Posterior cingulate gyrus (tissue), 11 donors: ENCODE measurements at regions of chr14 and their contacts with region 1.

Region 1: GRCh38 chr14:54420013-54420809 is 21.0 kb downstream of the CNIH1 start:
- DNase-seq: peak in 2 of 10 donors; percentile 16 to 21

Region 2: DNA sequence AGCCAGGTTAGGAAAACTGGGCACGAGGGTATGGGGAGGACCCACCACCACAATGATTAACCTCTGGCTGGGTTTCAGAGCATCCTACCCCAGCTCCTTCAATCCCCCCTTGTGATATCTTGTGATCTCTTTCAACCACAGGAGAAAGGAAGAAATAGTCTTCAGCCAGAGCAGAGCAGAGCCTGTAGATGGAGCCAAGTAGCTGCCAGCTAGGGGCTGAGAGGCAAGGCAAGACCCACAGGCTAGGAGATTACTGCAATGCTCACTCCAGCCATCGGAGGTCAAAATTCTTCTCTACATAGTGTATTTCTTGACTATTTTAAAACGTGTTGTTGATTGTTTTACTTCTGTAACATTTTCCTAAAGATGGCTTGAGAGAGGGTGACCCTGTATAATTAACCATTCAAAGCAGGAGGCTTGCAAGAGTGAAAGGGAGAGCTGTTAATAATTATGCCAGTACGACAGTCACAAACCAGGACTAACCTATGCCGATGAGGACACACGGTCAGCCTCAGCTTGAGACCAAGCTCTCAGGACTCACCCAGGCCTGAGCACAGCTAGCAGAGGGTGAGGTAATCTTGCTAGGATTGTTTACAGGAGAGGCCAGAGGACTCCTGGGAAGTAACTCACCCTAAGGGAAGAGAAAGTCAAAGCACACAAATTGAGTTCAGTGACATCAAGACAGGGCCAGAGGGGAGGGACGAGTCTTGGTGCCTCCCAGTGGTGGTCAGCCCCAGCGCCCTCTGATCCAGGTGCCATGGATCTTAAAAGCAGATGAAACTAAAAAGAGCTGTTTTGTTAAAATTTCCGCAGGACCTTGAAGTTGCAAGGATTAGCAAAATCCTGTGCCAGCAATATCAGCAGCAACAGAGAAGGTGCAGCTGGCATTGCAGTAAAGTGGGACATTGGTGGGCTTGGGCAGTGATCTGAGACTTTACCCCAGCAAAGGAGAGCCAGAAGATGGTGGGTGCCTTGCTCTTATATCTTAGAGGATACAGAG is 53.2 kb before region 1 on chr14:
- intact Hi-C with region 1: loop called (anchors 5 kb)
- DNase-seq: peak in 7 of 10 donors; percentile 41 to 93 (median 51)

Region 3: DNA sequence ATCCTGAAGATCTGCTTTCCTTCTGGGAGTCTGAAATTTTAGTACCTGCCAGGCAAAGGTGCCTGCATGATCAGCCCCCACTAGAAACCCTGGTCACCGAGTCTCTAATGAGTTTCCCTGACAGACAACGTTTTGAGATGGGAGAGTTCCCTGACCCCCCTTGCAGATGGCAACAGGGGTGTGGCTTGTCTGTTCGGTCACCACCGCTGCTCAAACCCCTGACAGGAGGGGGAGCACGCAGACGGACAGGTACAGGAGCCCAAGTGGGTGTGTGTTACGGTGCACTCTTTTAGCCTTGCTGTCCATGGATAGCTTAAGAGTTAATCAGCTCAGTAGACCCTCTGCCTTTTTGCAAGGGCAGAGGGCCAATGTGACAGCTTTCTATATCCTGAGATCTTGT is 42.7 kb before region 1 on chr14:
- intact Hi-C with region 1: no loop called
- DNase-seq: no peak